ENCODE measurements at regions of chr19 and their contacts with region 1.

Region 1: GRCh38 chr19:4007021-4007835 is at the start of gene PIAS4:
- DNase-seq: peak; percentile 89 to 99 (median 96)
- ATAC-seq: peak; percentile 91
- H3K4me3 ChIP-seq: peak within 1 kb of the TSS; percentile 68 to 87
- H3K4me3 Mint-ChIP-seq: peak within 1 kb of the TSS; percentile 83
- H3K27ac ChIP-seq: peak within 1 kb of the TSS; percentile 46 to 58
- H3K27ac Mint-ChIP-seq: peak within 1 kb of the TSS; percentile 84
- H3K4me1 ChIP-seq: peaks cover 38% of the 10 kb centered on the region
- H3K4me1 Mint-ChIP-seq: peaks cover 24% of the 10 kb centered on the region
- H3K27me3 ChIP-seq: no peaks in the 10 kb centered on the region
- H3K27me3 Mint-ChIP-seq: no peaks in the 10 kb centered on the region
- CTCF ChIP-seq: no peak
- total RNA-seq, gene PIAS4: 11.6 to 14.9 TPM

Region 2: GRCh38 chr19:3950871-3951861 is 56.1 kb before region 1 on chr19:
- CTCF ChIA-PET with region 1: no interaction called
- POLR2A ChIA-PET with region 1: no interaction called
- intact Hi-C with region 1: no loop called
- DNase-seq: peak in 3 of 9 experiments; percentile 21 to 56 (median 27)
- ATAC-seq: peak; percentile 29
- H3K4me3 ChIP-seq: peak overlapping the region in 1 of 2 experiments; percentile 26
- H3K4me3 Mint-ChIP-seq: peak overlapping the region; percentile 78
- H3K27ac ChIP-seq: peak overlapping the region in 1 of 2 experiments; percentile 28
- H3K27ac Mint-ChIP-seq: peak overlapping the region; percentile 75
- H3K4me1 ChIP-seq: peaks cover 14% of the 10 kb centered on the region
- H3K4me1 Mint-ChIP-seq: peaks cover 10% of the 10 kb centered on the region
- H3K27me3 ChIP-seq: no peaks in the 10 kb centered on the region
- H3K27me3 Mint-ChIP-seq: no peaks in the 10 kb centered on the region
- CTCF ChIP-seq: no peak

Region 3: DNA sequence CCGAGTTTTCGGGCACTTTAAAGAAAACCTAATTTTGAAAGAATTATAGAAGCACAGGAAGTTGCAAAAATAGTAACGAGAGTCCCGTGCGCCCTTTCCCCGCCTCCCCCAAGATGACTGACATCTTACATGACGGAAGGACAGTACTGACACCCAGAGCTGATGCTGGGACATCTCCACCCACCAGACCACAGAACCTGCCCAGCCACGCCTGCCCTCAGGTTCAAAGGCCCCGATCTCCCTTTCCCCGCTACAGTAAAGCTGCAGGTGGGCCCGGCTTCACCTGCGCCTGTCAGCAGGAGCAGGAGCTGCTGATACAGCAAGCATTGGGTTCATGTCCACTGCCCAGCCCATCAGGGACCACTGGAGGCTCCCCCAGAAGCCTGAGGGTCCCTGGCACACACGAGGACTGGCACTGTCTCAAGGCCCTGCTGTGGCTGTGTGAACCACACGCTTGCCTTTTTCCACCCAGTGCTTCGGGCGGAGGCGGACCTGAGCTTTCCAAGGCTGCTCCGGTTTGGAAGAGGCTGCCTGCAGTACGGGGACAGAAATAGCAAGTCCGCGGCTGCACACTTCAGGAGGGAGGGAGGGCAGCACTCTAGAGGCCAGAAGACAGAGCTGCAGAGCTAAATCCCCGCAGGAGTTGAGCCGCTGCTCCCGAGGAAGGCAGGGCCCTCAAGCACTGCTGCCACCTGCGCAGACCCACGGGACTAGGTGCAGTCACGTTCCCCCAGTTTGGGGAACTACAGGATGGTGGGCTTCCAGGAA is 108.0 kb after region 1 on chr19:
- CTCF ChIA-PET with region 1: interaction called, 3 read pairs
- POLR2A ChIA-PET with region 1: interaction called, 3 read pairs
- intact Hi-C with region 1: loop called (anchors 2 to 5 kb)
- DNase-seq: peak; percentile 39 to 91 (median 73)
- ATAC-seq: peak; percentile 99
- H3K4me3 ChIP-seq: peak overlapping the region in 1 of 2 experiments; percentile 50
- H3K4me3 Mint-ChIP-seq: peak overlapping the region; percentile 70
- H3K27ac ChIP-seq: peak overlapping the region; percentile 52 to 68
- H3K27ac Mint-ChIP-seq: peak overlapping the region; percentile 90
- H3K4me1 ChIP-seq: peaks cover 32% of the 10 kb centered on the region
- H3K4me1 Mint-ChIP-seq: peaks cover 45% of the 10 kb centered on the region
- H3K27me3 ChIP-seq: no peaks in the 10 kb centered on the region
- H3K27me3 Mint-ChIP-seq: no peaks in the 10 kb centered on the region
- CTCF ChIP-seq: no peak

Region 4: GRCh38 chr19:4123615-4124568 is 116.7 kb after region 1 on chr19 and contains the start of gene MAP2K2:
- CTCF ChIA-PET with region 1: no interaction called
- POLR2A ChIA-PET with region 1: no interaction called
- intact Hi-C with region 1: loop called (anchors 1 to 5 kb)
- DNase-seq: peak; percentile 91 to 98 (median 97)
- ATAC-seq: peak; percentile 96
- H3K4me3 ChIP-seq: peak within 1 kb of the TSS; percentile 57 to 72
- H3K4me3 Mint-ChIP-seq: peak within 1 kb of the TSS; percentile 93
- H3K27ac ChIP-seq: peak within 1 kb of the TSS; percentile 52 to 73
- H3K27ac Mint-ChIP-seq: peak within 1 kb of the TSS; percentile 91
- H3K4me1 ChIP-seq: peaks cover 17% of the 10 kb centered on the region
- H3K4me1 Mint-ChIP-seq: peaks cover 25% of the 10 kb centered on the region
- H3K27me3 ChIP-seq: no peaks in the 10 kb centered on the region
- H3K27me3 Mint-ChIP-seq: no peaks in the 10 kb centered on the region
- CTCF ChIP-seq: no peak
- total RNA-seq, gene MAP2K2: 73.9 to 76.8 TPM

Region 5: GRCh38 chr19:4647676-4648644 is 640.7 kb after region 1 on chr19:
- CTCF ChIA-PET with region 1: no interaction called
- POLR2A ChIA-PET with region 1: no interaction called
- intact Hi-C with region 1: no loop called
- DNase-seq: no peak
- ATAC-seq: no peak
- H3K4me3 ChIP-seq: no peak overlapping the region
- H3K4me3 Mint-ChIP-seq: no peak overlapping the region
- H3K27ac ChIP-seq: no peak overlapping the region
- H3K27ac Mint-ChIP-seq: no peak overlapping the region
- H3K4me1 ChIP-seq: no peaks in the 10 kb centered on the region
- H3K4me1 Mint-ChIP-seq: peaks cover 3% of the 10 kb centered on the region
- H3K27me3 ChIP-seq: no peaks in the 10 kb centered on the region
- H3K27me3 Mint-ChIP-seq: no peaks in the 10 kb centered on the region
- CTCF ChIP-seq: no peak

Measured in CD8-positive, alpha-beta T cell (primary cell).